ENCODE measurements at regions of chr5 and their contacts with region 1.

Region 1: GRCh38 chr5:115571441-115571878 is 26.9 kb upstream of the FEM1C start:
- DNase-seq: no peak
- H3K4me3 Mint-ChIP-seq: no peak overlapping the region
- H3K27ac Mint-ChIP-seq: no peak overlapping the region
- H3K4me1 Mint-ChIP-seq: no peaks in the 10 kb centered on the region
- H3K27me3 Mint-ChIP-seq: peaks cover 26% of the 10 kb centered on the region

Region 2: GRCh38 chr5:115098041-115098702 is 473.3 kb before region 1 on chr5:
- intact Hi-C with region 1: loop called (anchors 5 kb)
- DNase-seq: peak; percentile 75
- H3K4me3 Mint-ChIP-seq: no peak overlapping the region
- H3K27ac Mint-ChIP-seq: no peak overlapping the region
- H3K4me1 Mint-ChIP-seq: peaks cover 2% of the 10 kb centered on the region
- H3K27me3 Mint-ChIP-seq: peaks cover 23% of the 10 kb centered on the region

Region 3: GRCh38 chr5:115377468-115378217 is 193.8 kb before region 1 on chr5:
- intact Hi-C with region 1: loop called (anchors 5 kb)
- DNase-seq: no peak
- H3K4me3 Mint-ChIP-seq: no peak overlapping the region
- H3K27ac Mint-ChIP-seq: peak overlapping the region; percentile 4
- H3K4me1 Mint-ChIP-seq: peaks cover 17% of the 10 kb centered on the region
- H3K27me3 Mint-ChIP-seq: no peaks in the 10 kb centered on the region

Region 4: GRCh38 chr5:115530426-115530825 is 41.0 kb before region 1 on chr5:
- intact Hi-C with region 1: no loop called
- DNase-seq: no peak
- H3K4me3 Mint-ChIP-seq: no peak overlapping the region
- H3K27ac Mint-ChIP-seq: no peak overlapping the region
- H3K4me1 Mint-ChIP-seq: peaks cover 31% of the 10 kb centered on the region
- H3K27me3 Mint-ChIP-seq: no peaks in the 10 kb centered on the region

Region 5: GRCh38 chr5:116137544-116138378 is 566.3 kb after region 1 on chr5:
- intact Hi-C with region 1: no loop called
- DNase-seq: peak; percentile 65
- H3K4me3 Mint-ChIP-seq: no peak overlapping the region
- H3K27ac Mint-ChIP-seq: no peak overlapping the region
- H3K4me1 Mint-ChIP-seq: peaks cover 8% of the 10 kb centered on the region
- H3K27me3 Mint-ChIP-seq: no peaks in the 10 kb centered on the region

Measured in activated CD4-positive, alpha-beta T cell treated with anti-CD3 and anti-CD28 coated beads, Interleukin-2, amount 10 ng/mL, durations not matched to agents 24 days and 14 days (primary cell).